H1 (cell line): ENCODE measurements at regions of chr11 and their contacts with region 1.

Region 1: GRCh38 chr11:61827571-61828378 is at the start of gene FADS2:
- DNase-seq: peak; percentile 63 to 91
- H3K4me3 ChIP-seq: peak within 1 kb of the TSS; percentile 77 to 96 (median 86)
- H3K27ac ChIP-seq: peak within 1 kb of the TSS; percentile 74
- H3K4me1 ChIP-seq: peaks cover 9 to 28% (median 18%) of the 10 kb centered on the region in 4 experiments
- H3K27me3 ChIP-seq: no peaks in the 10 kb centered on the region
- CTCF ChIP-seq: 0 out of 4 replicates have a peak, but pooled peaks of 1 of the 3 experiments have one; percentile 12
- EP300 ChIP-seq: peak in 1 of 2 experiments; percentile 66; a peak in 1 of 3 replicates
- POLR2A ChIP-seq: peak; percentile 78 to 87; a peak in 2 of 3 replicates
- RAD21 ChIP-seq: no peak
- total RNA-seq, gene FADS2: 499 and 526 TPM in 2 replicates

Region 2: GRCh38 chr11:61803889-61804647 is 23.7 kb before region 1 on chr11:
- CTCF ChIA-PET with region 1: interaction called, 3 read pairs
- POLR2A ChIA-PET with region 1: interaction called, 354 read pairs
- DNase-seq: no peak
- H3K4me3 ChIP-seq: no peak overlapping the region
- H3K27ac ChIP-seq: no peak overlapping the region
- H3K4me1 ChIP-seq: no peaks in the 10 kb centered on the region
- H3K27me3 ChIP-seq: no peaks in the 10 kb centered on the region
- CTCF ChIP-seq: no peak
- EP300 ChIP-seq: no peak
- POLR2A ChIP-seq: 0 out of 3 replicates have a peak, but pooled peaks of 1 of the 2 experiments have one; percentile 21
- RAD21 ChIP-seq: no peak

Region 3: DNA sequence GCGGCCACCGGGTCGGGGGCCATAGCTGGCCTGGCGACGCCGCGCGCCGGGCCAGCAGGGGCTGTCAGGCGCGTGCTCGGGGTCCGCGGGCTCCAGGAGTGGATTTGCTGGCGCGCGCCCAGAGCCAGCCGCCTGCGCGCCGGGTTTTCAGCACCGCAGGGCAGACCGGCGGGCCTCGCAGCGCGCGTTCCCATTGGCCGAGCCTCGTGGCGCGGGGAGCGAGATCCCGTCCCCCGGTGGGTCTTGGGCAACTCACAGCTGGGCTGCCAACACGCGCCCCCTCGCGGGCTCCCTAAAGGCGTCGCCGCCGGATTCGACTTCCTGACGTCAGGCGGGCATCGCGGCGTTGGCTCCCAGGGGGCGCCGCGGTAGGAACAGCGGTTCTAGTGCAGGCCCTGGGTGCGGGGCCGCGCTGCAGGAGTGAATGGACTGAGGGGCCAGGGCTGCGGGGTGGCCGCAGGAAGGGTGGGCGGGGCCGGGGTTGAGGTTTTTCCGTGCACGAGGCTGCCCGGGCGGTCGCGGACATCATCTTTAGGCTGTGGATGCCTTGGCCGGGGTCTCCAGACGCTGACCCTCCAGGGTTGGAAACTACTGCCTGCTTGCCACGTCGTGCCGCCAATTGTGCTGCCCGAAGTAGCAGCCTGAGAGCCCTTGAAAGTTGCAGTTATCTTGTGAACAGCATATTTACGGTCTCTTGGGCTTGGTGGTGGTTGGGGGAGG is 10.9 kb before region 1 on chr11 and contains the start of gene FADS1:
- CTCF ChIA-PET with region 1: interaction called, 16 read pairs
- POLR2A ChIA-PET with region 1: interaction called, 210 read pairs
- DNase-seq: peak; percentile 89 to 92
- H3K4me3 ChIP-seq: peak within 1 kb of the TSS; percentile 74 to 92 (median 76)
- H3K27ac ChIP-seq: peak within 1 kb of the TSS; percentile 85
- H3K4me1 ChIP-seq: peaks cover 2 to 9% (median 5%) of the 10 kb centered on the region in 4 experiments; a peak in 5 of 7 replicates
- H3K27me3 ChIP-seq: no peaks in the 10 kb centered on the region
- CTCF ChIP-seq: peak; percentile 51 to 62 (median 57)
- EP300 ChIP-seq: 0 out of 3 replicates have a peak, but pooled peaks of 1 of the 2 experiments have one; percentile 21
- POLR2A ChIP-seq: peak in 1 of 2 experiments; percentile 17; a peak in 2 of 3 replicates
- RAD21 ChIP-seq: peak in 1 of 2 experiments; percentile 23; a peak in 2 of 4 replicates
- total RNA-seq, gene FADS1: 115 and 116 TPM in 2 replicates

Region 4: DNA sequence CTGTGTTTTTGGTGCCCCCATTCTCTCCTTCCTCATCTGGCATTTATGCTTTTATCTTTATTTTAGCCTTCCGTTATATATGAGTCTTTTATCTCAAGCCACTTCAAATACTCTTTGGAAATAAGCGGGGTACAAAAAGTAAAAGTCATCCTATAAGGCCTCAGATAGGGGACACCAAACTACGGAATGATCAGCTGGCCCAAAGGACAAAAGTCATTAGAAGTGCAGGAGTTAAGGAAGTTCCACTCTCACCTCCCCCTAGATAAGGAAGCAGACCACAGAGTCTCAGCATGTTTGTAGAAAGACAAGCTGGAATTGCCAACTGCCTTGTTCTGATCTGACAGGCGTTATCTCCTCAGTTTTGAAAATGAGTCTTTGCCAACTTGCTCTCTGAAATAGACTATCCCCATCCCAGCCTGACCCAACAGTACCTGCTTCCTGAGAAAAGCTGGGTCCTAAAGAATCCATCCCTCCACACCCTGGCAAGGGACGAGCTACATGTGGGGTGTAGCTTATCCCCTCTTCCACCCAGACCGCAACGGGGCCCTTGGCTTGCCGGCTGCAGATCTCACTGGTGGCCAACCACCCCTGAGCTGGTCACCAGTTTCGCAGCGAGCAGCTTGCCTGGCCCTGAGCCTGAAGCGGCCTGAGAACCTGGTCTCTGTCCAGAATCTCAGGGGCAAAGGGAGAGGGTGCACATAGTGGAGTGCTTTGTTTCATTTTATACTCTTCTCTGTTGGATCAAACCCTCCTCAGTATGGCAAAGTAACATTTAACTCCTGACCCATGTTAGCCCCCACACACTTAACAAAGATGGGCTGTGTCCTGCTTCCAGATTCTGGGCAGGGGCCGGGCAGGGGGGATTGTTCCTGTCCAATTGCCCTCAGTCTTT is 14.1 kb after region 1 on chr11:
- CTCF ChIA-PET with region 1: no interaction called
- POLR2A ChIA-PET with region 1: interaction called, 16 read pairs
- DNase-seq: no peak
- H3K4me3 ChIP-seq: no peak overlapping the region
- H3K27ac ChIP-seq: no peak overlapping the region
- H3K4me1 ChIP-seq: no peaks in the 10 kb centered on the region; a peak in 1 of 7 replicates
- H3K27me3 ChIP-seq: no peaks in the 10 kb centered on the region; a peak in 1 of 7 replicates
- CTCF ChIP-seq: no peak
- EP300 ChIP-seq: no peak
- POLR2A ChIP-seq: no peak
- RAD21 ChIP-seq: no peak

Region 5: DNA sequence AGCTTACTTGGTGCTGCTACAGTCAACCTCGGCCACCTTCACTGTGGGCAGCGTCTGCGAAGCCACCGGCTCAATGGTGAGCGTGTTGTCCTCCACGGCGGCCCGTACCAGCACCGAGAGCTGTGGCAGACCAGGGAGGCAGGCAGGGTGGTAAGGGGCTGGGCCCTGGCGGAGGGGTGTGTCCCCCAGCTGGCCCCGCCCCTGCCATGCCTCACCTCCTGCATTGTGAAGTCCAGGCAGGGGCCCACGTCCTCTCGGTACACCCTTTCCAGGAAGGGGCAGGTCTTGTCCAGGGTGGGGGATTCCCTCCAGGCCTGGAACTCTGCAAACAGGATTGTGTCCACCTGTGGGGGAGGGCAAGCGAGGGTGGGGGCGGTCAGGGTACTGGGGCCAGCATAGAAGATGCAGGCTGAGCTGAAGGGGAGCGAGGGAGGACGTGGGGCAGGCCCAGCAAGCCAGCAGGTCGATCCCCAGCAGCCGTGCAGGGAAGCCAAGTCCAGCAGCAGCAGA is 76.8 kb after region 1 on chr11:
- CTCF ChIA-PET with region 1: no interaction called
- POLR2A ChIA-PET with region 1: no interaction called
- DNase-seq: peak in 1 of 2 experiments; percentile 90
- H3K4me3 ChIP-seq: peak overlapping the region in 2 of 4 experiments; percentile 26 to 51; a peak in 4 of 8 replicates
- H3K27ac ChIP-seq: no peak overlapping the region
- H3K4me1 ChIP-seq: peaks cover 0 to 31% (median 19%) of the 10 kb centered on the region in 4 experiments; a peak in 6 of 7 replicates
- H3K27me3 ChIP-seq: no peaks in the 10 kb centered on the region
- CTCF ChIP-seq: no peak
- EP300 ChIP-seq: no peak
- POLR2A ChIP-seq: no peak
- RAD21 ChIP-seq: no peak

Region 6: DNA sequence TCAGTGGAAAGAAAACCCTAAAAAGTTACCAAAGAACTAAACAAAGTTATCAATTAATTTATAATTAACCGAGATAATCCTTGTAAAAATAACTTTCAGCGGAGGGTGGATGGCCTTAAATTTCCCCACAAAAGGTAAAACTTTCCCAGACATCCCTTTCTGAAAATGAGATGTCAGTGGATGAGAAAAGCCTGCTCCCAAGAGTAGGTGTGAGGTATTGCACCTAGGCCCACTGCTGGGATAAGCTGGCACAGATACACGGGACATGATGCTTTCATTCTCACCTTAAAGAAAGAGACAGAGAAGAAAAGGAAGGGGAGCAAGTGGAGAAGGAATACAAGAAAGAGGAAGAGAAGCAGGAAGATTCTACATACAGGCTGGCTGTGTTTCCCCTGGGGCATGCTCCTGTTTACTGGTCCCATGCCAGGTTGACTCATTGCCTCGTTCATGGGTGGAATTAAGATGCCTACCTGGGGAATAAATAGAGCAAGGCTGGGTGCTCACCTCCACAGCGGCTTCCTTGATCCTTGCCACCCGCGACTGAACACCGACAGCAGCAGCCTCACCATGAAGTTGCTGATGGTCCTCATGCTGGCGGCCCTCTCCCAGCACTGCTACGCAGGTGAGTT is 442.0 kb after region 1 on chr11 and contains the start of gene SCGB2A2:
- CTCF ChIA-PET with region 1: no interaction called
- POLR2A ChIA-PET with region 1: no interaction called
- DNase-seq: no peak
- H3K4me3 ChIP-seq: no peak within 1 kb of the TSS
- H3K27ac ChIP-seq: no peak within 1 kb of the TSS
- H3K4me1 ChIP-seq: no peaks in the 10 kb centered on the region
- H3K27me3 ChIP-seq: no peaks in the 10 kb centered on the region
- CTCF ChIP-seq: peak; percentile 38 to 62 (median 47)
- EP300 ChIP-seq: no peak
- POLR2A ChIP-seq: no peak
- RAD21 ChIP-seq: peak; percentile 37 to 64
- total RNA-seq, gene SCGB2A2: not detected in 2 replicates